Gastrocnemius medialis (tissue), 4 donors: ENCODE measurements at regions of chr11 and their contacts with region 1.

Region 1: GRCh38 chr11:83724008-83724461 is 437.9 kb upstream of the CCDC90B start:
- DNase-seq: no peak
- ATAC-seq: peak; percentile 33 to 50
- H3K4me3 ChIP-seq: peak overlapping the region; percentile 7 to 42 (median 28)
- H3K27ac ChIP-seq: no peak overlapping the region
- H3K4me1 ChIP-seq: no peaks in the 10 kb centered on the region
- H3K27me3 ChIP-seq: no peaks in the 10 kb centered on the region
- CTCF ChIP-seq: peak in 2 of 5 experiments; percentile 27 to 35
- POLR2A ChIP-seq: no peak

Region 2: GRCh38 chr11:83292709-83293456 is 431.2 kb before region 1 on chr11:
- in situ Hi-C with region 1: no loop called
- intact Hi-C with region 1: loop called (anchors 10 kb)
- DNase-seq: no peak
- ATAC-seq: peak in 1 of 2 donors; percentile 72
- H3K4me3 ChIP-seq: peak overlapping the region in 2 of 4 donors; percentile 16 to 27
- H3K27ac ChIP-seq: no peak overlapping the region
- H3K4me1 ChIP-seq: no peaks in the 10 kb centered on the region
- H3K27me3 ChIP-seq: no peaks in the 10 kb centered on the region
- CTCF ChIP-seq: peak; percentile 26 to 60 (median 43)
- POLR2A ChIP-seq: no peak

Region 3: GRCh38 chr11:83493917-83494316 is 230.1 kb before region 1 on chr11:
- in situ Hi-C with region 1: no loop called
- intact Hi-C with region 1: no loop called
- DNase-seq: no peak
- ATAC-seq: no peak
- H3K4me3 ChIP-seq: no peak overlapping the region
- H3K27ac ChIP-seq: no peak overlapping the region
- H3K4me1 ChIP-seq: no peaks in the 10 kb centered on the region
- H3K27me3 ChIP-seq: no peaks in the 10 kb centered on the region
- CTCF ChIP-seq: no peak
- POLR2A ChIP-seq: no peak